ENCODE measurements at regions of chr4 and their contacts with region 1.

Region 1: GRCh38 chr4:20700007-20700761 is at the start of gene PACRGL:
- H3K4me3 Mint-ChIP-seq: peak within 1 kb of the TSS; percentile 90
- H3K27ac Mint-ChIP-seq: peak within 1 kb of the TSS; percentile 93
- H3K4me1 Mint-ChIP-seq: peaks cover 34% of the 10 kb centered on the region
- H3K27me3 Mint-ChIP-seq: no peaks in the 10 kb centered on the region

Region 2: GRCh38 chr4:20625426-20625825 is 74.8 kb before region 1 on chr4:
- intact Hi-C with region 1: loop called (anchors 5 kb)
- H3K4me3 Mint-ChIP-seq: no peak overlapping the region
- H3K27ac Mint-ChIP-seq: peak overlapping the region; percentile 73
- H3K4me1 Mint-ChIP-seq: peaks cover 29% of the 10 kb centered on the region
- H3K27me3 Mint-ChIP-seq: no peaks in the 10 kb centered on the region

Region 3: DNA sequence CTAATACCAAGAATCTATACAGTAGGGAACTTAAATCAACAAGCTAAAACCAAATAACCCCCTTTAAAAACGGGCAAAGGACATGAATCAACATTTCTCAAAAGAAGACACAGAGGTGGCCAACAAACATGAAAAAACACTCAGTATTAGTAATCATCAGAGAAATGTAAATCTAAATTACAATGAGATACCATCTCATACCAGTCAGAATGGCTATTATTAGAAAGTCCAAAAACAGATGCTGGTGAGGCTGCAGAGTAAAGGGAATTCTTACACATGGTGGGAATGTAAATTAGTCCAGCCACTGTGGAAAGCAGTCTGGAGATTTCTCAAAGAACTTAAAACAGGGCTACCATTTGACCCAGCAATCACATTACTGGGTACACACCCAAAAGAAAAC is 167.9 kb after region 1 on chr4:
- intact Hi-C with region 1: no loop called
- H3K4me3 Mint-ChIP-seq: no peak overlapping the region
- H3K27ac Mint-ChIP-seq: no peak overlapping the region
- H3K4me1 Mint-ChIP-seq: no peaks in the 10 kb centered on the region
- H3K27me3 Mint-ChIP-seq: no peaks in the 10 kb centered on the region

Measured in dendritic cell treated with granulocyte-macrophage colony-stimulating factor and Interleukin-4, amounts not matched to agents 40 ng/mL and 50 ng/mL, for 4 days (primary cell).